ENCODE measurements at regions of chr5 and their contacts with region 1.

Region 1: GRCh38 chr5:62494772-62495171 is 82.2 kb downstream of the IPO11 start:
- DNase-seq: no peak
- ATAC-seq: no peak
- H3K4me3 ChIP-seq: no peak overlapping the region
- H3K27ac ChIP-seq: no peak overlapping the region
- H3K4me1 ChIP-seq: no peaks in the 10 kb centered on the region
- H3K27me3 ChIP-seq: no peaks in the 10 kb centered on the region
- CTCF ChIP-seq: no peak

Region 2: DNA sequence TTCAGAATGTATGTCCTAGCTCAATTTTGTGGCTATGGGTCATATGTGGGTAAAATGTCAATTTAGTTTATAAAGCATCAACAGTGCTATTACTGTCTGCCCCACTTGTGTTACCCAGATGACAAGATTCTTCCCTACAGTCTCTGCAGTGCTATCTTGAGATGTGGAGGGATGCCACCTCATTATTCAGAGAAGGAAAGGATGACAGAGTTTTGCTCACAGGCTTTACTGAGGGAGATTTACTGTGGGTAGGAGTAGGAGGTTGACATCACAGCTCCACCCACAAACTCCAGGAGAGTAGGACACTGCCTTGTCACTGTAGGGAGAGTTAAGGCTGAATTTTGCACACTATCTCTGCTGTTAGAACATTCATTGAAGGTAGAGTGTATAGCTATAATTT is 1108.2 kb after region 1 on chr5:
- intact Hi-C with region 1: loop called in 1 of 10 experiments (anchors 5 kb)
- DNase-seq: no peak
- ATAC-seq: no peak
- H3K4me3 ChIP-seq: no peak overlapping the region
- H3K27ac ChIP-seq: no peak overlapping the region
- H3K4me1 ChIP-seq: no peaks in the 10 kb centered on the region
- H3K27me3 ChIP-seq: no peaks in the 10 kb centered on the region
- CTCF ChIP-seq: no peak

Measured in heart right ventricle (tissue), 16 donors.